AG04449 (cell line): ENCODE measurements at regions of chr1 and their contacts with region 1.

Region 1: DNA sequence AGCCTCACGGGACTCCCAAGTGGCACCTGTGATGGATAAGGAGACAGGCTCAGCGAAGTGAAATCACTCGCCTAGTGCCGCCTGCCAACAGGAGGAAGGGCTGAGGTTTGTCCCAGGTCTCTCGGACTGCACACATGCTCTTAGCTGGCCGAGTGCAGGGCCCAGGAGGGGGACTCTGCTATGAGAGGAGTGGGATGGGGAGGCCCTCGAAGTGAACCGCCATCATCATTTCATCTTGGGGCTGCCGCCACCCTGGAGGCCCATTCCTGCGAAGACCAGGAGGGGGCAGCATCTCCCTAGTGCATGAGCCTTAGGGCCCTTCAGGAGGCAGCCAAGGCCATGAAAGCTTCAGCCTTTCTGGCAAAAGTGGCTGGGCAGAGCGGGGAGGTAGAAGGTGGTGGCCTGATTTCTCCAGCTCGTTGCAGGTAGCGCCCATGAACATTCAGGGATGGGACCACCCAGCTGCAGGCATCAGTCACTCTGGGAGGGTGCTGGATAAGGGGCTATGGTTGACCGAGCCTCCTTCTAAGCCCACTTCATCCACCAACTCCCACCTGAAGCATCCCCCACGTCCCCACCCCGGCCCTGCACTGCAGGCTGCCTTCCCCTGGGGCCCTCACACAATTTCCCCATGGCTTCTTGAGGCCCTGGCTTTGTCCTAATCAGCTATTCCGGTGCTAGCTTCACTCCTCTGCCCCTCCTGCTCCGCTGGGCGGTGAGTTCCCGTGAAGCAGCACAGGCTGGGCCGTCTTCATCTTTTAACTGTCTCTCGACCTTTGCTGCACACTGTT is 17.2 kb upstream of the RASSF5 start:
- DNase-seq: no peak
- H3K4me3 ChIP-seq: no peak overlapping the region
- CTCF ChIP-seq: peak; percentile 98

Region 2: DNA sequence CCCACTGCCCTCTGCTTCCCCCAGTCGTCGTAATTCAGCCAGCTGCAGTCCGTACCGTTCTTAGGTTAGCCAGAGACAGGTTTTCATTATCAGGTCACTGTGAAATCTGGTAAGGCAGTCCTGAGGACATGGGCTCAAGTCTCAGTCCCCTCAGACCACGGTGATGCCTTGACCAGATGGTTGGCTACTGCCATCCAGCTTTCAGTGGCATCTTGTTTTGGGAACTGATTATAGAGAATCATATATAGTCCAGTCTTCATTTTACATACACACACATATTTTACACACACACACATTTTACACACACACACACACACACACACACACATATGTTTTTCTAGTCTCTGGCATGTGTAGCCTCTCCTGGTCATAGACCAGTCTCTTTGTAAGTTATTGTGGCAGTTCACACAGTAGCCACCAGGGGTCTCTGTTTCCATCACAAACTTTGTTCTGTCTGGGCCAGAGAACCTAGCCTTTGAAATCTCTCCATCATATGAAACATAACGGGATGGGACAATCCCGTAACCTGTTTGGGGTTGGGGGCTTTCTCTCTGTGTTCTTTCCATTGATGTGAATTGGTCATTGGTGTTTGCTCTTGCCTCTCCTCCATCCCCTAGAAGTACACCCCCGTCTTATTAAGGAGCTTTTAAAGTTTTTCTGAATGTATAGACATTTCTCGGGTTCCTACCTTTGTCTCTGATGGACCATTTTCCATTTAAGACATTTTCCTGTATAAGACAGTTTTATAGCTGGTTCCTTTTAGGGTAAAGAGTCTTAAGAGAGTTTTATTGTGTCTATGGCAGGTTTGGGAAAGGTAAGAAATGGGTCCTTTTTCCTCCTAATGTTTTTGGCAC is 28.3 kb before region 1 on chr1:
- CTCF ChIA-PET with region 1: interaction called, 21 read pairs
- POLR2A ChIA-PET with region 1: no interaction called
- DNase-seq: no peak
- H3K4me3 ChIP-seq: no peak overlapping the region
- CTCF ChIP-seq: peak; percentile 62

Region 3: GRCh38 chr1:206507284-206508129 is 17.3 kb after region 1 on chr1 and contains the start of gene RASSF5:
- CTCF ChIA-PET with region 1: interaction called, 148 read pairs
- POLR2A ChIA-PET with region 1: interaction called, 3 read pairs
- DNase-seq: no peak
- H3K4me3 ChIP-seq: peak within 1 kb of the TSS; percentile 61
- CTCF ChIP-seq: no peak

Region 4: DNA sequence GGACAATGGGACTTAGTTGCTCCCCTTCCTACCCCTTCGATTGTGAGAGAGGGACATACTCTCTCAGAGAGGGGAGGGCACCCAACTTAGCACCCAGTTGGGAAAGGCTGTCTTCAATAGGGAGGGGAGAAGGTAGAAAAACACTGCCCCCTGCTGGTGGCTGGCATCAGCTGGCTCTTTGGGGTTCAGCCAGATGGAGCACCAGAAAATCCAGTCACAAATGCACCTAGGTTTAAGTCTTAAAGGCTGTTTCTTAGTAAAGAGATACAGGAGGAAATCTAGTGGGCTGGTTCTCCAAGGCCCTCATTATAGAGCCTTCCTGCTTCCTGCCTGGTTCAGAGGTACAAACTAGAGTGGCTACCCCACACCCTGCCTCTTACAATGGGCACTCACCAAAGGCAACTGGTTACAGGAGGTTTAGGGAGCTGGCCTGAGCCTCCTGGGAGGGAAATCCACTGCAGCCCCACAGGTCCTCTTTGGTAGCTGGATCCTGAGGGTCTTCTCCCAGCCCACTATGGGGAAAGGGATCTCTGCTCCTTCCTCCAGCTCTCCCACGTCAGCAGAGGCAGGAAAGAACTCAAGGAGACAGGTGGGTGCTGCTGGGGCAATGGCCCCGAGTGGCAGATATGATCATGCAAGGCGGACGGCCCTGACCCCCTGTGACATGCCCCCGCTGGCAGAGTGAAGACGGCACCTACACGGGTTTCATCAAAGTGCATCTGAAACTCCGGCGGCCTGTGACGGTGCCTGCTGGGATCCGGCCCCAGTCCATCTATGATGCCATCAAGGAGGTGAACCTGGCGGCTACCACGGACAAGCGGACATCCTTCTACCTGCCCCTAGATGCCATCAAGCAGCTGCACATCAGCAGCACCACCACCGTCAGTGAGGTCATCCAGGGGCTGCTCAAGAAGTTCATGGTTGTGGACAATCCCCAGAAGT is 93.8 kb after region 1 on chr1:
- CTCF ChIA-PET with region 1: interaction called, 568 read pairs
- POLR2A ChIA-PET with region 1: interaction called, 6 read pairs
- DNase-seq: no peak
- H3K4me3 ChIP-seq: no peak overlapping the region
- CTCF ChIP-seq: peak; percentile 72

Region 5: GRCh38 chr1:206612129-206612876 is 122.1 kb after region 1 on chr1 and contains the start of gene EIF2D:
- CTCF ChIA-PET with region 1: interaction called, 28 read pairs
- POLR2A ChIA-PET with region 1: no interaction called
- DNase-seq: no peak
- H3K4me3 ChIP-seq: peak within 1 kb of the TSS; percentile 95
- CTCF ChIP-seq: peak; percentile 99

Region 6: DNA sequence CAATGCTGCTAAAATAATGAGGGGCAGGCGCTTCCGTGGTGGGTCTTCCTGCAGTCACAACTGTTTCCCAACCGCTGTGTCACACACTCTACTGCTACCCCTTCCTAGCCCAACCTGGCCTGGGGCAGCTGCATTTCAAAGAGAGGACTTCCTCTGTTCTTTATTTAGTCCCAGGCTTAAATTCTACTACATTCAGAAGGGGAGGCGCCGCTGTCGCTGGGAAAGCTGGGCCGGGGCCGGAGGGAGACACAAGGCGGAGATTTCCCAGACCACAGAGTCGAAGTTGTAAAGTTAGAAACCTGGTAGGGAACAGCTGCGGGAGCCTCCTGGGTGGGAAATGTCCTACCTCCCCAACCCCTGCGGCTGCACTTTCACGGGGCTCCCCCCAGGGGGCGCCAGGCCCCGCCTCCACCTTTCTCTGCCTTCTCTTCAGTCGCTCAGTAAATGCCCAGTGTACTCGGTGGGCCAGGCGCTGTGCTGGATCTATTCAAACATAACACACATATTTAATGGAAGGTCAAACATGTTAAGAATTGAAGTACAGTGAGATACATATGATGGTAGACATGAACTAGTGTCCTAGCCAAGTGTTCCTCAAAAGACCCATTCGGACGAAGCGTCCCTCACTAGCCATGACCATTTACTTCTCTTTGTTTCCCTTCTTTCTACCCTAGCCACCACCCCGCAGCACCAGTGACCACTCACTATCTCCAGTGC is 168.2 kb after region 1 on chr1:
- CTCF ChIA-PET with region 1: interaction called, 107 read pairs
- POLR2A ChIA-PET with region 1: no interaction called
- DNase-seq: no peak
- H3K4me3 ChIP-seq: no peak overlapping the region
- CTCF ChIP-seq: peak; percentile 80

Region 7: GRCh38 chr1:206982216-206982615 is 492.0 kb after region 1 on chr1:
- CTCF ChIA-PET with region 1: interaction called, 32 read pairs
- POLR2A ChIA-PET with region 1: no interaction called
- DNase-seq: no peak
- H3K4me3 ChIP-seq: no peak overlapping the region
- CTCF ChIP-seq: peak; percentile 65